Activated CD4-positive, alpha-beta memory T cell treated with anti-CD3 and anti-CD28 coated beads for 36 hours (primary cell): ENCODE measurements at regions of chr1 and their contacts with region 1.

Region 1: DNA sequence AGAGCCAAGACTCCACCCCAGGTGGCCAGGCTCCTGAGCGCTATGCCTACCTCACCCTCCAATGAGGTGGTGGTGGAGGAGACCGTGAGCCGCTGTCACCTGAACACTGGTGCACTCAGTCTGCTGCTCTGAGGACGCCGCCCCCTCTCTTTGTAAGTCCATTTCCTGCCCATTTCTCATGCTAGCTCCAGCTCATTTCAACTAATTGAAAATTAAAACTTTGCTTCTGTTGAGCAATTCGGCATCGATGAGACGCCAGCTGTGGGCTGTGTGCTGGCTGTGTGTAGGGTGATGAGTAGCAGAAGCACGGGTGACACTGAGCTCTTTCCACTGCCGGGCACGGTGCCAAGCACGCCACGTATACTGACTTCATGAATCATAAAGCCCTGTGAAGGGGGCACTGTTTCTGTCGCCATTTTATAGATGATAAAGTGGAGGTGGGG is 11.2 kb downstream of the TNFRSF1B start:
- DNase-seq: peak; percentile 97
- H3K4me3 Mint-ChIP-seq: peak overlapping the region; percentile 54
- H3K27ac Mint-ChIP-seq: peak overlapping the region; percentile 94
- H3K4me1 Mint-ChIP-seq: peaks cover 94% of the 10 kb centered on the region
- H3K27me3 Mint-ChIP-seq: no peaks in the 10 kb centered on the region

Region 2: DNA sequence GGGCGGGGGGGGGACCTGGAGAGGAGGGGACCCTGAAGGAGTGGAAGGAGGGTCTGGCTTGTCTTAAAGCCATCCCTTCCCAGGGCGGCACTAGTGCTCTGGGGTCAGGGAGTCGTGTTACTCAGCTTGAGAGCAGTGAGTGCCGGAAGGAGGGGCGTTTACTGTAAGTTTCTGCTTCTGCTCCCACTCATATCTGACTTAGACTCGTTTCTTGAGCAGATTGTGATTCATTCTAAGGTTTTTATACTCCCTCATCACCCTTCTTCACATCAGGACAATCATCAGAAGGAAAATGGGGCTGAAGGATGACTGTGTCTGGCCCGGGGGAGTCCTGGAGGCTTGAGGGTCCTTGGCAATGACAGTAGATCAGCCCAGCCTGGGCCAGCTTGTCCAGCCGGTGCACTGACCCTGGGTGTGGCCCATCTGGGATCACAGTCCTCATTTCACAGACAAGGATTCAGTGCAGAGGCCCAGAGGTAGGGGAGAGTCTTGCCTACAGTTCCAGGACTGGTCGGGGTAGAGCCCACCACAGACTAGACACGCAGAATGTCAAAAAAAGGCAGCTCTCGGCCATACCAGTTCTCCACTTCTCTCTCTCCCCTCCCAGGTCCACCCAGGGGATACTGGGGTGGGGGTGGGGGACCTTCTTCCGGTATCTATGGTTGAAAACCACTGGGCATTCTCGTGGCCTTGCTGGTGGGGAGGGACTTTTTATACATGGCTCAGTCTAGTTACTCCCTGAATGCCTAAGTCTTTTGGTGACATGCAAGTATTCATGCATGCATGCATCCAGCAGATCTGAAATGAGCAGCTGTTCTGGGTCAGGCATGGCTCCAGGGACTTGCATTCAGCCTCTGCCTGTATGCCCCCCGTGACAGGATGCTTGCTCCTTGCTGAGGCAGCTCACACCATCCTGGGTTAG is 109.9 kb before region 1 on chr1:
- CTCF ChIA-PET with region 1: no interaction called
- POLR2A ChIA-PET with region 1: no interaction called
- intact Hi-C with region 1: loop called (anchors 5 kb)
- DNase-seq: peak; percentile 89
- H3K4me3 Mint-ChIP-seq: peak overlapping the region; percentile 69
- H3K27ac Mint-ChIP-seq: peak overlapping the region; percentile 96
- H3K4me1 Mint-ChIP-seq: peaks cover 62% of the 10 kb centered on the region
- H3K27me3 Mint-ChIP-seq: peaks cover 32% of the 10 kb centered on the region

Region 3: GRCh38 chr1:12161662-12162458 is 16.2 kb before region 1 on chr1:
- CTCF ChIA-PET with region 1: interaction called, 19 read pairs
- POLR2A ChIA-PET with region 1: interaction called, 24 read pairs
- intact Hi-C with region 1: loop called (anchors 1 kb)
- DNase-seq: peak; percentile 92
- H3K4me3 Mint-ChIP-seq: no peak overlapping the region
- H3K27ac Mint-ChIP-seq: peak overlapping the region; percentile 90
- H3K4me1 Mint-ChIP-seq: peaks cover 80% of the 10 kb centered on the region
- H3K27me3 Mint-ChIP-seq: no peaks in the 10 kb centered on the region

Region 4: GRCh38 chr1:12208764-12209494 is 30.9 kb after region 1 on chr1:
- CTCF ChIA-PET with region 1: interaction called, 8 read pairs
- POLR2A ChIA-PET with region 1: interaction called, 6 read pairs
- intact Hi-C with region 1: loop called (anchors 2 kb)
- DNase-seq: peak; percentile 91
- H3K4me3 Mint-ChIP-seq: no peak overlapping the region
- H3K27ac Mint-ChIP-seq: peak overlapping the region; percentile 44
- H3K4me1 Mint-ChIP-seq: peaks cover 45% of the 10 kb centered on the region
- H3K27me3 Mint-ChIP-seq: no peaks in the 10 kb centered on the region

Region 5: DNA sequence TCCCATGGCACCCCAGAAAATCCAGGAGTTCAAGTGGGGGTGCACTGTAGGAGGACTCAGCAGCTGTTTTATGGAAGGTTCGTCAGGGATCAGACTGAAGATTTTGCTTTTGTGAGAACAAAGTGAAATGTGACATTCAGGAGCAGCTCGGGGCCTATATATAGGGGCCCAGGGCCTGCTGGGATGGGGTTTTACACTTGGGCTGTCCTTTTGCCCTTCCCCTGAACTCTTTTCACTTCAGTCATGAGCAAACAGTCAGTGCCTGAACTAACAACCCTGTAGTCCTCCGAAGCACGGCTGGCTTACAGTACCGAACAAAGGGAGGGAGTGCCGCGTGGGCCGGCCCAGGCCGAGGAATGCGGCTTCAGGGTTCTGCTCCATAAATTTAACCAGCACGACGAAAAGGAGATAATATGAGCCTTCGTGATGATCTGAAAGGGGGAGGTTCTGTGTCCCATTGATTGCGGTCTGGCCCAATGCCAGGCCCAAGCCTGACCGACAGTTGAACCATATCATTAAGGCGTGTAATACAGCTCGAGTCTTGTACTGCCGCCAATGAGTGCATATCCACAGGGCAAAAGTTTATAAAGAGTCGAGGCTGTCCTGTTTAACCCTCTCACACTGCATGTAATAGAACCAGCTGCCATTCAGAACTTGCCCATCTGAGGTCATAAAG is 300.1 kb after region 1 on chr1:
- CTCF ChIA-PET with region 1: no interaction called
- POLR2A ChIA-PET with region 1: no interaction called
- intact Hi-C with region 1: loop called (anchors 10 kb)
- DNase-seq: peak; percentile 21
- H3K4me3 Mint-ChIP-seq: peak overlapping the region; percentile 1
- H3K27ac Mint-ChIP-seq: peak overlapping the region; percentile 70
- H3K4me1 Mint-ChIP-seq: peaks cover 89% of the 10 kb centered on the region
- H3K27me3 Mint-ChIP-seq: no peaks in the 10 kb centered on the region

Region 6: DNA sequence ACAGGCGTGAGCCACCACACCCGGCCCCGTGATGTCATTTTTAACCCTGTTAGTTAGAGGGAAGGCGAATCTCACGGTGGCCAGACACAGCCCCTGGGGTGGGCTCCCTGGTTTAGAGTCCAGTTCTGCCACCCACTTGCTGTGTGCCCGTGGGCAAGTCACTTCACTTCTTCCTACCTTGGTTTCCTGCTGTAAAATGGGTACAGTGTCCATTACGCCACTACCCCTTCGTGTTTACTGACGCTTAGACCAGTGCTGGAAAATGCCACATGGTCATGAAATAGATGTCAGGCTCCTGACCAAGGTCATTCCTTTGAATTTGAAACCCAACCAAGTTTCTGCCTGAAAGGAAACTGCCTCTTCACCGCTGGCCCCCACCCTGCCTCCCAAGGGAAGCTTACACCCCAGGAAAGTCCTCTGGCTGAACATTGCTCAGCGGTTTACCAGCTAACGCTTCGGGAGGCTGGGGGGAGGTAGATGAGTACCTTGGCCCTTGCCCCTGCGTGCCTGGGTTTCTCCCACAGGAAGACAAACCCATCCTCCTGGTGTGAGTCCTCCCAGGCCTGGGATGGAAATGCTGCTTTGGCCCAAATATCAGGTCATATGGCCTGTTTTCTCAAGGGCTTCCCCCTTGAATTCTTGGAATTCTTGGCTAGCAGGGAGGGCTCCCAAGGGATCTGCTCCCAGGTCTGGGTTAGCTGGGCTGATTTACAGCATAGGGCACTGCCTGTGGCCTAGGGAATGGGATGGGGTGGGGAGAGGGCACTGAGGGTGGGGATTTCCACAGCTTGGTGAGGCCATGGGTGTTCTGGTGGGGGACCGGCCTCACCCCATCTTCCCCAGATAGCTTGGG is 458.3 kb after region 1 on chr1:
- CTCF ChIA-PET with region 1: no interaction called
- POLR2A ChIA-PET with region 1: no interaction called
- intact Hi-C with region 1: no loop called
- DNase-seq: no peak
- H3K4me3 Mint-ChIP-seq: no peak overlapping the region
- H3K27ac Mint-ChIP-seq: no peak overlapping the region
- H3K4me1 Mint-ChIP-seq: no peaks in the 10 kb centered on the region
- H3K27me3 Mint-ChIP-seq: peaks cover 3% of the 10 kb centered on the region